ENCODE measurements at regions of chr2 and their contacts with region 1.

Region 1: GRCh38 chr2:36507408-36507812 is 90.6 kb downstream of the FEZ2 start:
- DNase-seq: peak in 4 of 5 donors; percentile 25 to 57 (median 38)
- H3K4me3 ChIP-seq: no peak overlapping the region
- H3K27ac ChIP-seq: no peak overlapping the region
- H3K4me1 ChIP-seq: no peaks in the 10 kb centered on the region
- H3K27me3 ChIP-seq: no peaks in the 10 kb centered on the region
- CTCF ChIP-seq: peak in 2 of 3 donors; percentile 29 to 38
- EP300 ChIP-seq: no peak
- POLR2A ChIP-seq: no peak

Region 2: DNA sequence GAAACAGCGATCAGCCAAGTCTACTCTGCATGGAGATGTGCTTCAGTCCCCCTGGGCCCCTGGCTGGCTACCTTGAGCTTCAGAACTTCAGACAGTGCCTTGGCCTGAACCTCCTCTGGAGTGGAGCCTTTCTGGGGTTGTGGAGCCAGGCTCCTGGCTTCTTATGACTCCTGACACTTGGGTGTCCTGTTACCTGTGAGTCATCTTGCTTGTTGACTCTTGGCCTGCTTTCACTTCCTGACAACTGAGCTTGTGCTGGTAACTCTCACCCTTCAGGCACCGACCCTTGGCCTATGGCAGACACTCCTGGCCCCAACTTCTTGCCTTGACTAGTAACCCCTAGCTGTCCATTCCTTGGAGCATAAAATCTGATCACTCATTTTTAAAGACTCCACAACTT is 142.6 kb after region 1 on chr2:
- intact Hi-C with region 1: loop called in 1 of 4 experiments (anchors 10 kb)
- DNase-seq: no peak
- H3K4me3 ChIP-seq: no peak overlapping the region
- H3K27ac ChIP-seq: no peak overlapping the region
- H3K4me1 ChIP-seq: no peaks in the 10 kb centered on the region
- H3K27me3 ChIP-seq: no peaks in the 10 kb centered on the region
- CTCF ChIP-seq: no peak
- EP300 ChIP-seq: no peak
- POLR2A ChIP-seq: no peak

Measured in ovary (tissue), 10 donors.